ENCODE measurements at regions of chr9 and their contacts with region 1.

Region 1: DNA sequence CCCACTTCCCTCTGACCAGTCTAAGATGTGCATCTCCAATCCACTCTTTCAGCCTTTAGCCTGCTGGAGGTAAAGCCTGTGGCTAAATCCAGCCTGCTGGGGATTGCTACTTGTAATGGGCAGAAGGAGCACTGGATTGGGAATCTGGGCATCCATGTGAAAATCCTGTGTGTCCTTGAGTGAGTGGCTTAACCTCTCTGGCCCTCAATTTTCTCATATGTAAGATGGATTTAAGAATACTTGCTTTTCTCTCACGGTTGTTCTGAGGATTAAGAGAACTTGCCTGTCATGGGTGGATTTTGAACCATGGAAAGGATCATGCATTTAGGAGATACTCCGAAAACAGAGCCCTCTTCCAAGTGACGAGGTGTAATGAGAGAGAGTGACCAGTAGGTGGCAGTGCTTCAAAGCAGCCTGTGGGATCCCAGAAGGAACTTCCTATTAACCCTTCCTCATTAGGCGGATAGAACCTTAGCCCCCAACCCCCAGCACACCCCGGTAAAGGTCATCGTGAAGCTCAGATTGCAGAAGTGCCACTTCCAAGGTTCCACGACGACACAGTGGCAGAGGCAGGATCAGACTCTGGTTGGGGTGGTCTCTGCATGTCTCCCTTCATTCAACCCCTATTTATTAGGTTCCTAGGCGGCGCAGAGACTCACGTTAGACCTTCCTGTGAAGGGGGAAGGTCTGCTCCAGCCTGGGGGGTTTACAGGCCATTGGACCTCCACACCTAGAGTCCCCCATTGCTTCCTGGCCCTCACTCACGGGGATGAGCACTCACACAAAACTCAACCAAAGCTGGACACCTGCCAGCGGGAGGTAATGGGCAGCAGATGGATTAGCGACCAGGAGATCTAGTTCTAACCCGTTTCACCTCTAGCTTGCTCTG is 68.7 kb upstream of the ZNF618 start:
- DNase-seq: peak in 4 of 5 donors; percentile 12 to 18 (median 16)
- H3K4me3 ChIP-seq: no peak overlapping the region
- H3K4me3 Mint-ChIP-seq: no peak overlapping the region
- H3K27ac ChIP-seq: no peak overlapping the region
- H3K27ac Mint-ChIP-seq: no peak overlapping the region
- H3K4me1 ChIP-seq: no peaks in the 10 kb centered on the region
- H3K4me1 Mint-ChIP-seq: peaks cover 0 to 3% (median 0%) of the 10 kb centered on the region in 4 donors
- H3K27me3 ChIP-seq: no peaks in the 10 kb centered on the region
- H3K27me3 Mint-ChIP-seq: peaks cover 5 to 11% of the 10 kb centered on the region in 2 donors

Region 2: DNA sequence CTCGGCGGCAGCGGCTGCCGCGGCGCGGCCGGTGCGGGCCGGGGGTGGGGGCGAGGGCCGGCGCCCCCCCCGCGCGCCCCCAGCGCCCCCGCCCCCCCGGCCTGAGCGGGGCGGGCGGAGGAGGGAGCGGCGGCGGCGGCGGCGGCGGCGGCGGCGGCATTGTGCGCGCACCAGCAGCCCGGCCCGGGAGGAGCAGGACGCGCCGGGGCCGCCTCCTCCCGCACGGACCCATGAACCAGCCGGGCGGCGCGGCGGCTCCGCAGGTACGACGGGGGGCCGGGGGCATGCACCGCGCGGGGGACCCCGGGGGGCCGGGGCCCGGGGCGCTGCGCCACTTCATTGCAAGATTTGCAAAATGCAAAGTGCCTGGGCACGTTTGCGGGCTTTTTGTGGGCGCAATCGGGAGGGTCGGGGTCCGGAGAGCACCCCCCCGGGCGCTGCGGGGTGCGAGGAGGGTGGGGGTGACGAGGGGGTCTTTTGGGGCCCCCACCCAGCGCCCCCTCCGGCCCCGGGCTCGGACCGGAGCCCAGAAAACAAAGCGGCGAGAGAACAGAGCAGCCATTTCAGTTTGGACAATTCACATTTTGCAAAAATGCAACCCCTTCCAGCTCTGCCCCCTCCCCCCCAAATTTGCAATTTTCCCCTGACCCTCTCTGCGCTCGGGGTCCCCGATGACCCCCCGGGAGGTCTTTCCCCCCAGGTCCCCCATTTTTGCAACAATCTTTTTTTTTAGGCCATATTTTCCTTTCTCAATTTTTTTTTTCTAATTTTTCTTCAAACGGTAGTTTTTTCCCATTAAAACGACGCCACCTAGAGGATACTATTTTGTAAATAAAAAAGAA is 69.0 kb after region 1 on chr9 and contains the start of gene ZNF618:
- CTCF ChIA-PET with region 1: interaction called, 3 read pairs
- POLR2A ChIA-PET with region 1: no interaction called
- intact Hi-C with region 1: loop called (anchors 1 kb)
- DNase-seq: peak in 4 of 5 donors; percentile 3 to 12 (median 8)
- H3K4me3 ChIP-seq: peak within 1 kb of the TSS; percentile 43 to 47
- H3K4me3 Mint-ChIP-seq: peak within 1 kb of the TSS; percentile 88 to 99 (median 96)
- H3K27ac ChIP-seq: no peak within 1 kb of the TSS
- H3K27ac Mint-ChIP-seq: peak within 1 kb of the TSS in 3 of 7 donors; percentile 10 to 81 (median 33)
- H3K4me1 ChIP-seq: no peaks in the 10 kb centered on the region
- H3K4me1 Mint-ChIP-seq: peaks cover 0 to 7% (median 4%) of the 10 kb centered on the region in 4 donors
- H3K27me3 ChIP-seq: no peaks in the 10 kb centered on the region
- H3K27me3 Mint-ChIP-seq: peaks cover 6 to 10% of the 10 kb centered on the region in 2 donors
- total RNA-seq, gene ZNF618: 0.80 to 1.7 TPM